Activated T-helper 2 cell treated with anti-CD3 and anti-CD28 coated beads, Interferon-gamma antibody, Interleukin-2, Interleukin-4, amounts not matched to agents 10 μg/mL and 5 μg/mL and 100 μg/mL, durations not matched to agents 14 hours and 24 hours and 36 hours (primary cell): ENCODE measurements at regions of chr10 and their contacts with region 1.

Region 1: DNA sequence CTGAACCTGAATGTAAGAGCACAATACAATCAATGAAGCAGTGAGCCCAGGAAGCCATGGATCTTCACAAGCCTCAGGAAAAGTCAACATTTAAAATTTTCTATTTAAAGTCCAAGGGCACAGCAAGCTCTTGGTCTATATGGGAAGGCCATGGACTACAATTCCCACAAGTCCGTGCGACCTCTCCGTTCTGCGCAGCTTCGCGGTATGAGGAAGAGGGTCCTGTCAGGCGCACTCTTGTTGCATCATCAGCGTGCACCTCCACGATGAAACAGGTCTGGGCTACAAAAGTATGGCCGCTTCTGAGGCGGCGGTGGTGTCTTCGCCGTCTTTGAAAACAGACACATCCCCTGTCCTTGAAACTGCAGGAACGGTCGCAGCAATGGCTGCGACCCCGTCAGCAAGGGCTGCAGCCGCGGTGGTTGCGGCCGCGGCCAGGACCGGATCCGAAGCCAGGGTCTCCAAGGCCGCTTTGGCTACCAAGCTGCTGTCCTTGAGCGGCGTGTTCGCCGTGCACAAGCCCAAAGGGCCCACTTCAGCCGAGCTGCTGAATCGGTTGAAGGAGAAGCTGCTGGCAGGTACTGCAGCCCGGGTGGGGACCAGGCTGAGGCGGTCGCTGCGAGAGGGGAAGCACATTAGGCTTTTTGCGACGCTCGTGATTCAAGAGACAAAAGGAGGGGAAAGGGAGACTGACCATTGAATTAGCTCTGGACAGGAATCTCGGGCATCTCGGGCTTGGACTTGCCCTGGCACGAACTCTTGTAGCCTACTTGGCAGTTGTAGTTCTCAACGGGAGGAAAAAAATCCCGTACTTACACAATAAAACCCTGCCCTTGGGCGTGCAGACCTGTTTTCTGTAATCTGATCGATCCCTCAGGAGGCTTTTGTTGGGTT is at the start of gene TRUB1:
- DNase-seq: peak; percentile 80
- H3K4me3 Mint-ChIP-seq: peak within 1 kb of the TSS; percentile 95
- H3K27ac Mint-ChIP-seq: peak within 1 kb of the TSS; percentile 93
- H3K4me1 Mint-ChIP-seq: peaks cover 28% of the 10 kb centered on the region
- H3K27me3 Mint-ChIP-seq: no peaks in the 10 kb centered on the region
- total RNA-seq, gene TRUB1: 20.3 and 21.4 TPM in 2 replicates

Region 2: DNA sequence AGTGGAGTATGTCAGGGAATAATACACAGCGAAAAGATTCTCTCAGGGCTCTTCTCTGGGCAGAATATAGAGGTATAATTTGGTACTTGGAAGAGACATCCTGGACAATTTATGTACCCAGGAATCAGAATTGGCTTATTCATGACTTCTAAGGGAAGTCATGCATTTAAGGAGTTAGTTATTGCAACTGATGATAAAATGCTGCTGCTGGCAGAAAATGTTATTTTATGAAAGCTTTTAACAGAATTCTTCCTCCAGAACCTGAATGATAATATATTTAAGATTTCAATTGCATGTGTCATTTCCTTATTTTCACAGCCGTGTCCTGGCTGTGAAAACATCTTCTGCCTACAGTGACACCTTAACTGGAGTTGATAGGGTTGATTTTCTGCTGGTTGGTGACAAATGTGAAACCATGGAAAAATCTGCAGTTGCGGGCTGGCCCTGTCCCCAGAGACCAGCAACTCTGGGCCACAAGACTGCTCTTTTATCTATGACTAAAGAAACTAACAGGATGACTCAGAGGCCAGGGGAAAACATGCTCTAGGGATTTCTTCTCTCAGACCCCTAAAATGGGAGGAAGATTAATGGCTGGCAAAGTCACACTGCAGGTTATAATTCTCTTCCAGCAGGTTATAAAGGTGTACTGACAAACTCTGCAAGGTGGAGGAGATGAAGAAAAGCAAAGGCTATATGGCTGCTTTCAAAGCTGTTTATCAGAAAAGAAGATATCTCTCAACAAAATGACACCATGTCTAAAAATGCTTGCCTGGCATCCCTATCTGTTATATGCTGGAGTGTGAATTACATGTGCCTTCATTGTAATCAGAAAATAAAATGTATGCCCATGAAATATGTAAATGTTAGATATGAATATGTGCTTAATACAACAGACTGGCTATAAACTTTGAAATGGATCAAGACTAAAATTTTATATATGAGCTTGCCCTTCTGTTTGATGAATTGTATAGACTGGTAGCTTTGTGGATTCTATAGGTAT is 12.3 kb before region 1 on chr10:
- intact Hi-C with region 1: loop called (anchors 1 kb)
- DNase-seq: peak; percentile 18
- H3K4me3 Mint-ChIP-seq: no peak overlapping the region
- H3K27ac Mint-ChIP-seq: peak overlapping the region; percentile 60
- H3K4me1 Mint-ChIP-seq: peaks cover 22% of the 10 kb centered on the region
- H3K27me3 Mint-ChIP-seq: peaks cover 2% of the 10 kb centered on the region